ENCODE measurements at regions of chr18 and their contacts with region 1.

Region 1: GRCh38 chr18:21600526-21601410 is at the start of gene ESCO1:
- DNase-seq: peak; percentile 90
- H3K27ac ChIP-seq: peak within 1 kb of the TSS; percentile 98
- CTCF ChIP-seq: peak; percentile 96

Region 2: GRCh38 chr18:21612125-21612991 is 11.6 kb after region 1 on chr18 and contains the start of gene SNRPD1:
- CTCF ChIA-PET with region 1: interaction called, 21 read pairs
- POLR2A ChIA-PET with region 1: interaction called, 3 read pairs
- DNase-seq: peak; percentile 89
- H3K27ac ChIP-seq: peak within 1 kb of the TSS; percentile 90
- CTCF ChIP-seq: peak; percentile 94

Region 3: DNA sequence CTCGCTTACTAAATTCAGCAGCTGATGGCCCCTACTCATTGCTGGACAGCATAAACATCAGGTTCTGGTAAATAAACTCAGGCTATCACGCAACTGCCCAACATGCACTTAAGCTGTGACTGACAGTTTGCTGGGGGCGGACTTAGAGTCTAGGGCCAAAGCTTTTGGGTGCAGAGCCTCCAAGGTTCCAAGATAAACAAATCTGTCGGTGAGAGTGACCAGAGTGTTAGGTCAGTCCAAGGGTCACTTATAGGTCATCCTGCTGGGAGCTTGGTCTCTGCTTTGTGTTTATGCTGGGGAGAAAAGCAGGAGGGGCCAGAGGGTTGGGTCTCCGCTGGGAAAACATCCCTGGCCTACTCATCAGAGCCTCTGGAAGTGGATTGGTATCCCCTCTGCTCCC is 380.0 kb after region 1 on chr18:
- CTCF ChIA-PET with region 1: no interaction called
- POLR2A ChIA-PET with region 1: no interaction called
- DNase-seq: no peak
- H3K27ac ChIP-seq: no peak overlapping the region
- CTCF ChIP-seq: no peak

Measured in RWPE1 (cell line).